ENCODE measurements at regions of chr15 and their contacts with region 1.

Region 1: DNA sequence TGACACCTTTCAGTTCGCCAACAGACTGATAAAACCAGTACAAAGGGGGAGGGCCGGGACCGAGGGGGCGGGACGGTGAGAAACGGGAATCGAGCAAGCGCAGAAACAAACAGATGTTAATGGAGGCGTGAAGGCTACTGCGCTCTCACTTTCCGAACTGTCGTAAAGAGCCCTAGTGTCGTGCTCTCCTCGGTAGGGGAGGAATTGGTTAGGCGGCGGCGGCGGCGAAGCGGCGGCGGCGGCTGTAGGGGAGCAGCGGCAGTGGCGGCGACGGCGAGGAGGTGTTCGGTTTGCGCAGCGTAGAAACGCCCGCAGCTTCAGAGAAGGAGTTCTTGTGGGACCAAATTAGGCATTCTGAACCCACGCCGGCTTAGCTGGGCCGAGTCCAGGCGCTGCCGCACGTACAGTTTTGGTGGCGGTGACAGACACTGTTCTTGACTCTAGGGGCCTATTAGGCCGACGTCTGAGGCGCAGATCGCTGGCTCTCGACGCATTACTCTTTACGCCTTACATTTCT is at the start of gene RNF111:
- DNase-seq: peak; percentile 95
- total RNA-seq, gene RNF111: 25.9 TPM

Region 2: DNA sequence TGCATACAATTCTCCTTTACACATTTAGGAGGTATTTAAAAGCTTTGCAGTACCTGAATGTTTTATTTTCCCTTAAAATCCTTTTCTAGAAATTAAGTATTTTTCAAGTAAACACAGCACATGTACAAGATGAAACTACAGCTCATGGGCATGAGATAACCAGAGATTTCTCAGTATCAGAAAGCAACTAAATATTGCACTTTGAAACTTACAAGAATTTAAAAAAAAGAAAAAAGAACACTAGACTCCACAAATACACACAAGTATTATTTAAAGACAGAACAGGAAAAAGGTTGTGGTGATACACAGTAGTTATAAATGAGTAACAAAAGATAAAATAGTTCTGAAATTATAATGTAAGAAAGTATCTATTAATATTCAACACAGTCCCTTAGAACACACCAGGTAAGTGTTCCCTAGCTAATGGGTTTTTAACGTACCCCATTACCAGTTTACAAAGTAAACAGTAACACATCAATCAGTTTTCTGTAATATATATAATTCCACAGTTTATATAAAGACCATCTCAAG is 89.3 kb before region 1 on chr15:
- intact Hi-C with region 1: no loop called
- DNase-seq: no peak

Region 3: GRCh38 chr15:59039225-59039624 is 51.7 kb after region 1 on chr15:
- intact Hi-C with region 1: no loop called
- DNase-seq: no peak

Region 4: DNA sequence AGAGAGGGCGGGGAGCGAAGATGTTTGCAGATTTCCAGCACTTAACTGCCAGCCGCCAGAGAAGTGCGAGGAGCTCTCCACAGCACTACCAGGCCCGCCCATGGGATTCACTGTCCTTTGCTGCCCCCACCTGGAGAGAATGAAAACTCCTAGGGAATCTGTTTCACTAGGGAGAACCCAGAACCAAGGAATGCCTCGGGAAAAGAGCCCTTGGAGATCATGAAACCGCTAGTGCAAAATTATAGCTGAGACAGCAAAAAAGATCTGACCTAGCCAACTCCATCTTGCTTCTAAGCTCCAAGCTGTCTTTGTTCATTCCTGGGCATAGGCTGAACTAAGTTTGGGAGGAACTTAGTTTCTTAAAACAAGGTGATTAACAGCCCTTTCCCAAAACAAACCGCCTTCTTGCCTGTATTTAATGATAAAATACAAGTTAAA is 541.4 kb after region 1 on chr15:
- intact Hi-C with region 1: loop called (anchors 10 kb)
- DNase-seq: peak; percentile 89

Measured in cardiac septum (tissue), 1 donor.